RWPE1 (cell line): ENCODE measurements at regions of chr1 and their contacts with region 1.

Region 1: DNA sequence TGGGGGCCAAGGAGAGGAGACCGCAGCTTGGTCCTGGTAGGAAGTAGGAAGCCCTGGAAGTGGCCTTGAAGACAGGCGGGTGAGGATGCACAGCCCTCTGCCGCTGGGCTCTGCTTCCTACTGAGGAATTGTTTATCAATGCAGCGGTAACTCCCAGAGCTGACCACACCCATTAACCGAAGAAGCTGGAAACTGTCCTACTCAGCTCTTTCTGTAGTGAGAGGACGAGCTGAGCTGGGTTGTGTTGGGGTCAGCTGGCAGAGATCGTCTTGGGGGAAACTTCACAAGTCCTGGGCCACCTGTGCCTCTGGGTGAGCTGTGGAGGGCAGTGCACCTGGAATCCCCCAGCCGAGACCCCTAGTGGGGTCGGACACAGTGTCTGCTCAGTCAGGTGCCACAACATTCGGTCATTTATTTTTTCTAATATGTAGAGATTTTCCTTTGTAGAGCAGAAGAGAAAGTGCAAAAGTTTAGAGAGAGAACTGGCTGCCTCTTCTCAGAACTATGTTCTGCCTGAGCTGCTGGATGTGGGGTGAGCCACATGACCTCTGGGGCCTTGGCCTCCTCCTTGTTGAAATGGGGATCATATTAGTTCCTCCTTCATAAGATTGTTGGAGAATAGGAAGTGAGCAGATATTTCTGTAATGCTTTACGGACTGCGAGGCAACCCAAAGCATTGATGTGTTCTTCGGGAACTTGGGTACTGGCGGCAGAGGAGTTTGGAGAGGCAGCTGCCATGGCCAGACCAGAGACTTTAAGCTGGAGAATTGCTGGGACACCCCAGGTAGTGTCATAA is 3.6 kb downstream of the NECAP2 start:
- DNase-seq: no peak
- H3K27ac ChIP-seq: no peak overlapping the region
- CTCF ChIP-seq: no peak

Region 2: GRCh38 chr1:16396591-16396990 is 47.6 kb before region 1 on chr1:
- CTCF ChIA-PET with region 1: interaction called, 8 read pairs
- POLR2A ChIA-PET with region 1: interaction called, 11 read pairs
- DNase-seq: peak; percentile 93
- H3K27ac ChIP-seq: peak overlapping the region; percentile 88
- CTCF ChIP-seq: no peak